Colonic mucosa (tissue), 4 donors: ENCODE measurements at regions of chr13 and their contacts with region 1.

Region 1: GRCh38 chr13:26698392-26699196 is 62.0 kb downstream of the GPR12 start:
- DNase-seq: peak; percentile 79
- H3K4me3 ChIP-seq: no peak overlapping the region
- H3K27ac ChIP-seq: no peak overlapping the region
- H3K4me1 ChIP-seq: no peaks in the 10 kb centered on the region
- H3K27me3 ChIP-seq: no peaks in the 10 kb centered on the region
- CTCF ChIP-seq: peak; percentile 95

Region 2: DNA sequence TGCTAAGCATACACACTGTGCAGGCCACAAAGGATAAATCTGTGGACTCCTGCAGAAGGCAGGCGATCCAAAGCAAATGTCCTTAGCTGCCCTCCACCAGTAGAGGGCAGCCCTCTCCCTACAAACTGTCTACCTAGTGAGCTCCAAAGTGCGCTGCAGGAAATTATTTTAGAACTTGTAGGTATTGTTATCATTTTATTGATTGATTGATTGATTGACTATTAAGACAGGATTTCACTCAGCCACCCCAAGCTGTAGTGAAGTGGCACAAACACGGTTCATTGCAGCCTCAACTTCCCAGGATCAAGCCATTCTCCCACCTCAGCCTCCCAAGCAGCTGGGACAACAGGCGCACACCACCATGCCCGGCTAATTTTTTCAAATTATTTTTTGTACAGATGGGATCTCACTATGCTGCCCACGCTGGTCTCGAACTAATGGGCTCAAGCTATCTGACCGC is 513.8 kb before region 1 on chr13:
- intact Hi-C with region 1: loop called (anchors 5 kb)
- DNase-seq: peak; percentile 77
- H3K4me3 ChIP-seq: no peak overlapping the region
- H3K27ac ChIP-seq: no peak overlapping the region
- H3K4me1 ChIP-seq: peaks cover 2% of the 10 kb centered on the region
- H3K27me3 ChIP-seq: no peaks in the 10 kb centered on the region
- CTCF ChIP-seq: peak; percentile 88

Region 3: GRCh38 chr13:26482451-26483197 is 216.0 kb before region 1 on chr13:
- intact Hi-C with region 1: loop called (anchors 5 kb)
- DNase-seq: peak; percentile 82
- H3K4me3 ChIP-seq: no peak overlapping the region
- H3K27ac ChIP-seq: no peak overlapping the region
- H3K4me1 ChIP-seq: no peaks in the 10 kb centered on the region
- H3K27me3 ChIP-seq: no peaks in the 10 kb centered on the region
- CTCF ChIP-seq: peak; percentile 88